Esophagus muscularis mucosa (tissue), 4 donors: ENCODE measurements at regions of chr20 and their contacts with region 1.

Region 1: GRCh38 chr20:33489495-33490022 is 337 bp upstream of the CBFA2T2 start:
- DNase-seq: peak; percentile 100
- H3K4me3 ChIP-seq: peak overlapping the region; percentile 73 to 96 (median 94)
- H3K27ac ChIP-seq: peak overlapping the region; percentile 95 to 96 (median 96)
- H3K4me1 ChIP-seq: peaks cover 23 to 43% (median 29%) of the 10 kb centered on the region in 4 donors
- H3K27me3 ChIP-seq: no peaks in the 10 kb centered on the region
- CTCF ChIP-seq: no peak
- EP300 ChIP-seq: no peak
- POLR2A ChIP-seq: peak; percentile 95

Region 2: DNA sequence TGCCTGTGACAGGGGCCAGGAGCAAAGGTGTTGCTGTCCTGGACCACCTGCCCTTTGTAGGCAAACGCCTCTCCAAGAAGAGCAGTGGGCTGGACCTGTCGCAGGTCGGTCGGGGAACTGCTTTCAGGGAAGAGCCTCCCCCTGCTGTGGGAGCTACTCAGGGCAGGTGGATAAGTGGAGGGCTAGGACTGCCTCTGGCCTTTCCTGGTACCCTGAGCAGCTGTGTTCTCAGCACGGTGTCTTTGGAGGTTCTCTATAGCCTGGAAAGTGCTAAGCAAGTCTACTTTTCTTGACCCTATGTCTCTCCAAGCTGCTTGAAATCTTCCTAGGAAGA is 171.5 kb before region 1 on chr20:
- intact Hi-C with region 1: no loop called
- DNase-seq: no peak
- H3K4me3 ChIP-seq: no peak overlapping the region
- H3K27ac ChIP-seq: no peak overlapping the region
- H3K4me1 ChIP-seq: no peaks in the 10 kb centered on the region
- H3K27me3 ChIP-seq: peaks cover 0 to 59% (median 0%) of the 10 kb centered on the region in 4 donors
- CTCF ChIP-seq: no peak
- EP300 ChIP-seq: no peak
- POLR2A ChIP-seq: no peak

Region 3: GRCh38 chr20:33437141-33437911 is 52.2 kb before region 1 on chr20:
- intact Hi-C with region 1: no loop called
- DNase-seq: no peak
- H3K4me3 ChIP-seq: no peak overlapping the region
- H3K27ac ChIP-seq: peak overlapping the region in 2 of 4 donors; percentile 20 to 31
- H3K4me1 ChIP-seq: peaks cover 23 to 34% (median 32%) of the 10 kb centered on the region in 4 donors
- H3K27me3 ChIP-seq: no peaks in the 10 kb centered on the region
- CTCF ChIP-seq: no peak
- EP300 ChIP-seq: no peak
- POLR2A ChIP-seq: no peak

Region 4: DNA sequence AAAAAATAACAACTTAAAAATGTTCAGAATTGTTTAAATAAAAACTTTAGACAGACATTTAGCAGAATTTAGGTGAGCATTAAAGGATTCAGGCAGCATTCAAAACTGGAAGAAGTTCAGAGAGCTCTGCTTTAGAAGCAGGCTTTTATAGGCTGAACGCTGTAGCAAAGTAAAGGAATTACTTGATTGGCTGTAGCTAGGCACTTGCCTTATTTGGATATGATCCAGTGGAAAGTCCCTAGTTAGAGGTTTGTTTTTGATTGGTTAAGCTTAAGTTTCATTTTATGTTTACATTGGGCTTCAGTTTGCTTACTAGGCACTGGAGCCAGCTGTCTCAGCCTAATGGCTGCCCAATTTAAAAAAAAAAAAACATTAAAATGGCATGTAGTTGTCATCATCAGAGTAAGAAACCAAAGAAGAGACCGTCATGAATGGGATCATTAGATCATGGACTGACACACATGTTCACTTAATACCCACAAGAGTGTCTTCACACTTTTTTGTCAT is 65.4 kb after region 1 on chr20:
- intact Hi-C with region 1: loop called (anchors 10 kb)
- DNase-seq: no peak
- H3K4me3 ChIP-seq: peak overlapping the region in 3 of 4 donors; percentile 2 to 31 (median 19)
- H3K27ac ChIP-seq: peak overlapping the region; percentile 58 to 64 (median 61)
- H3K4me1 ChIP-seq: peaks cover 5 to 41% (median 34%) of the 10 kb centered on the region in 4 donors
- H3K27me3 ChIP-seq: no peaks in the 10 kb centered on the region
- CTCF ChIP-seq: no peak
- EP300 ChIP-seq: no peak
- POLR2A ChIP-seq: no peak